ENCODE measurements at regions of chr2 and their contacts with region 1.

Region 1: GRCh38 chr2:96305091-96305978 is at the start of gene SNRNP200:
- DNase-seq: peak; percentile 84 to 92
- H3K4me3 ChIP-seq: peak within 1 kb of the TSS; percentile 57 to 69
- H3K27ac ChIP-seq: peak within 1 kb of the TSS; percentile 70 to 84
- H3K4me1 ChIP-seq: peaks cover 3 to 26% (median 12%) of the 10 kb centered on the region in 4 donors
- H3K27me3 ChIP-seq: peaks cover 0 to 4% of the 10 kb centered on the region in 2 donors
- CTCF ChIP-seq: no peak

Region 2: DNA sequence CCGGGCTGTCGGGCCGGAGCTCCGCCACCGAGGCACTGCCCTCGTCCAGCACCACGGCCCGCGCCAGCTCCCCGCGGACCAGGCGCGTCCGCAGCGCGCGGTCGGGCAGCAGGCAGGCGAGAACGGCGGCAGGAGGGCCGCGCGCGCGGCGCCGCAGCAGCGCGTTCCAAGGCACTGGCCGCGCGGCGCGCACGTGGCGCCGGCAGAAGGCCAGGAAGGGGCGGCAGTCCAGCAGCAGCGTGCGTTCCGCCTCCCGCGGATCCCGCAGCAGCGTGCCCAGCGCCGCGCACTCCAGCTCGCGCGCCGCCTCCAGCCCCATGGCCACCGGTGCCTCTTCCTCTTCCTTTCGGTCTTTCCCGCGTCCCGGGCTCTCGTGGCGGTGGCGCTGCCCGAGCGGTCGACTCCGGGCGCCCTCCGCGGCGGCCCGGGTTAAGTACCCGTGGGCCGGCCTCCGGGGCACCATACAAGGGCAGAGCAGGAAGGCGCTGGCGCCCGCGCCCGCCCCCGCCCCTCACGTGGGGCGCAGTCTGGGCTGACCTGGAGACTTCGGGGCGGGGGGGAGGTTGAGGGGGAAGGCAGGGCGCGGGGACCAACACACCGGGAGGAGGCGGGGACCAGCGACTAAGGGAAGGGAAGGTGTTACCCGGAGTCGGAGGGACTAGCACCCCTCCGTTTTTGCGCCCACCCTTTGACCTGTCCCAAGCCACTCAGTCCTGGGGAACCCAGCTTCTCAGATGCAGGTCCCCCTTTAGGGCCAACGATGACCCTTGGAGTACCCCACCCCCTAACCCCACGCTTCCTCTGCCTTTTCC is 160.1 kb before region 1 on chr2 and contains the start of gene DUSP2:
- intact Hi-C with region 1: loop called (anchors 10 kb)
- DNase-seq: peak; percentile 71 to 82
- H3K4me3 ChIP-seq: peak within 1 kb of the TSS; percentile 51 to 59
- H3K27ac ChIP-seq: peak within 1 kb of the TSS in 1 of 2 donors; percentile 35
- H3K4me1 ChIP-seq: peaks cover 0 to 39% (median 19%) of the 10 kb centered on the region in 4 donors
- H3K27me3 ChIP-seq: peaks cover 0 to 2% of the 10 kb centered on the region in 2 donors
- CTCF ChIP-seq: no peak

Region 3: GRCh38 chr2:96265840-96266679 is 39.3 kb before region 1 on chr2 and contains the starts of genes CIAO1 and TMEM127:
- intact Hi-C with region 1: loop called (anchors 2 kb)
- DNase-seq: peak; percentile 98 to 99
- H3K4me3 ChIP-seq: peak within 1 kb of the TSS; percentile 70 to 97
- H3K27ac ChIP-seq: peak within 1 kb of the TSS; percentile 88 to 97
- H3K4me1 ChIP-seq: peaks cover 0 to 53% (median 42%) of the 10 kb centered on the region in 4 donors
- H3K27me3 ChIP-seq: no peaks in the 10 kb centered on the region
- CTCF ChIP-seq: peak; percentile 31 to 43

Measured in tibial artery (tissue), 4 donors.